GM12878 (cell line): ENCODE measurements at regions of chr12 and their contacts with region 1.

Region 1: GRCh38 chr12:96020314-96021003 is 14.9 kb downstream of the LTA4H start:
- DNase-seq: peak; percentile 19
- ATAC-seq: peak; percentile 100
- H3K4me3 ChIP-seq: no peak overlapping the region
- H3K27ac ChIP-seq: peak overlapping the region; percentile 46; the same call in 1 of the 2 replicates
- H3K4me1 ChIP-seq: peaks cover 15% of the 10 kb centered on the region
- H3K27me3 ChIP-seq: no peaks in the 10 kb centered on the region
- CTCF ChIP-seq: no peak
- EP300 ChIP-seq: peak in 1 of 2 experiments; percentile 91; a peak in 2 of 4 replicates
- POLR2A ChIP-seq: no peak
- RAD21 ChIP-seq: no peak

Region 2: DNA sequence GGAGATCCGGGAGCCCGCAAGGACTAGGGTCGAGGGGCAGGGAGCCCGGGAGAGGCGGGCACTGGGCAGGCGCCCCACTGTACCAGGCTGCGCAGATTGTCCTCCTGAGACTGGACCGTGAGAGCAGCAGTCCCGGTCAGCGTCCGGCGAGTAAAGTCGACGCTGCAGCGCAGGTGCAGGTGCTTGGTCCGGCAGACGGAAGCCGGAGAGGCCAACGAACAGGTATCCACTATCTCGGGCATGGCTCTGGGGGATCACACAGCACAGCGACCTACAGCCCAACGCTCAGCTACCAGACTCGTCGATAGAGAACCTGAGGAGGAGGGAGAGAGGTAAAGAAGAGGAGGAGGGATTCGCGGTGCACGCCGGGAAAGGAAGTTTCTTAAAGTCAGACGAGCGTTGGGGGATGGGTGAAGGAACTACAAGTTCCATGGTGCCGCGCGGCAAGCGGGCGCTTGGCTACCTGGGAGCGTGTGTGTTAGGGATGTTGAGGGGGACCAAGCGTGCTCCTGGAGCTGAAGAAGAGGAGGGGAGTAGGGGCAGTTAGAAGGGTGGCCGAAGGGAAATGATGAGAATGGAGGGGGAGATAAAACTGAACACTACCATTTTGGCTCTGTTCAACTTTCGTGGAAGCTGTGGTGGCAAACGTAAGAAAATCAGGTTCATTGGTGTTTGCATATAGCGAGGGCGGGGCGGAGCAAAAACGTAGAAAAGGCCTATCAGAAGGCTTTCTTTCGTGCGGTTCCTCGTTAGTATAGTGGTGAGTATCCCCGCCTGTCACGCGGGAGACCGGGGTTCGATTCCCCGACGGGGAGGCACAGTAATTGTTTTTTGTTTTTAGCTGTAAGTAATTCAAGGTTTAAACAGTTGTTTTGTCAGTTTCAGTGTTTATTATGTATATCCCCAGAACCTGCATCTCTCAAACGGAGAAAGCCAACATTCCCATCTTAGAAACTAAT is 15.1 kb after region 1 on chr12 and contains the start of gene LTA4H:
- CTCF ChIA-PET with region 1: interaction called, 14 read pairs
- POLR2A ChIA-PET with region 1: interaction called, 6 read pairs
- RAD21 ChIA-PET with region 1: interaction called, 7 read pairs
- SMC1A ChIA-PET with region 1: interaction called, 28 read pairs
- in situ Hi-C with region 1: no loop called
- intact Hi-C with region 1: loop called (anchors 2 kb)
- DNase-seq: peak; percentile 97
- ATAC-seq: peak; percentile 93
- H3K4me3 ChIP-seq: peak within 1 kb of the TSS; percentile 77
- H3K27ac ChIP-seq: peak within 1 kb of the TSS; percentile 38; the same call in 1 of the 2 replicates
- H3K4me1 ChIP-seq: peaks cover 4% of the 10 kb centered on the region; the same call in 1 of the 2 replicates
- H3K27me3 ChIP-seq: no peaks in the 10 kb centered on the region
- CTCF ChIP-seq: no peak
- EP300 ChIP-seq: no peak; a peak in 1 of 4 replicates
- POLR2A ChIP-seq: peak; percentile 95
- RAD21 ChIP-seq: no peak
- polyA plus RNA-seq, gene LTA4H: 47.2 to 47.4 TPM